Right ventricle myocardium inferior (tissue), 1 donor: ENCODE measurements at regions of chr20 and their contacts with region 1.

Region 1: GRCh38 chr20:17682103-17682888 is at the start of gene RRBP1:
- DNase-seq: peak; percentile 99
- ATAC-seq: peak; percentile 96
- total RNA-seq, gene RRBP1: 38.5 TPM

Region 2: GRCh38 chr20:17542993-17543412 is 139.3 kb before region 1 on chr20:
- intact Hi-C with region 1: no loop called
- DNase-seq: no peak
- ATAC-seq: peak; percentile 79

Region 3: GRCh38 chr20:17749975-17750721 is 67.9 kb after region 1 on chr20:
- intact Hi-C with region 1: loop called (anchors 5 kb)
- DNase-seq: peak; percentile 81
- ATAC-seq: peak; percentile 92

Region 4: DNA sequence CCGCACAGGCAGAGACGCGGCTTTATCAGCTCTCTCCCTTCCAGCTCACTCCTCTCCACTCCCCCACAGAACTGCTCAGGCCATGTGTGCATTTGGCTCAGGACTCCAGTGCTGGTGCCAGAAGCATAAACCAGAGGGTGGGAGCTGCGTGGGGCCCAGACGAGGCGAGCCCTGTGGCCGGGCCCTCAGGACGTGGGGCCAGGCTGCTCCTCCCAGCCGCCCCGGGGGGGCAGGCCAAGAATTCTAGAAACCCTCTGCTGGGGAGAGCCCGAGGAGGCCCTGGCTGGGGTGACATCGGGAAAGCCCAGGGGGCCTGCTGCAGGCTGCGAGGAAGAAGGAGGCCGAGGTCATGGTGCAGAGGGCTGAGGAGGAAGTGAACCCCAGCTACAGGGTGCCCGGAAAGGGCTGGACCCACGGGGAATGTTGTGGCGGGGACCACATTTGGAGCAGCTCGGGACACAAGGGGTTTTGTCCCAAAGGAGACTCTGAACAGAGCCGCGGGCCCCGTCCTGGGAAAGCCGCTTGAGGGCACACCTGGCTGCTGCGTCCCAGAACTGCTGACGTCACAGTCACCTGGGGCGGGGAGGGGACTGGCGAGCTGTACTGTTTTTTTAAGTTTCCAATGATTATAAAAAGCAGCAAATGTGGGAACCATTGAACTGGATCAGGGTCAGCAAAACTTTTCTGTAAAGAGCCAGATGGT is 124.6 kb after region 1 on chr20:
- intact Hi-C with region 1: loop called (anchors 5 kb)
- DNase-seq: peak; percentile 86
- ATAC-seq: peak; percentile 91

Region 5: DNA sequence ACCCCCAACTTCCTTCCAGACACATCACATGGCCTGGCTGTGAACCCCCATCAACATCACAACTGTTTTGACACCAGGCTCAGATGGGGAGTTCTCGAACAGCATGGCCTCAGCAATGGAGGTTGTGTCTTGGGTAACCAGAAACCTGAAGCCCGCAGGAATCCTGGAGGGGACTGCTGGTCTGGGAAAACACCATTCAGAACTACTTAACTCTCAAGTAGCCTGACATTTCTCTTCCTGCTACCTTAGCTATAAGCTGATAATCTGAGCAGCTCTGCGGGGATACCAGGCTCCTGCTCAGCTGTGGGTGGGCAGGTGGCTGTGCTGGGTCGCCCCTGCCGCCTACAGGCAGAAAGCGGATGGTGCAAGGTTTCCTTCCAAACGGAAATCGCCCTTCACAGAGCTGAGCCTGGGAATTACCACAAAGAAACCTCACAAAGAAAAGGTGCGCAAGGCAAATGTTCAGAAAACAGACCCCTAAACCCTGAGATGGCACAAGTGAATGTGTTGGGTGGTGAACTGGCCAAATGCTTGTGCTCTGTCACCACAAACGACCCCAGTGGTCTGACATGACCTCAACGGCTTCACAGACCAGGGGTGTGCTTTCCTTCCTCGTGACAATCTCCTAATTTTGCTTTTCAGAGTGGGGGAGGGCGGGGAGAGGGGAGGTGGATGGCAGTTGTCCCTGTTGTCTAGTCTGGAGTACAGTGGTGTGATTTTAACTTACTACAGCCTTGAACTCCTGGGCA is 256.7 kb after region 1 on chr20:
- intact Hi-C with region 1: loop called (anchors 5 kb)
- DNase-seq: peak; percentile 77
- ATAC-seq: peak; percentile 70

Region 6: DNA sequence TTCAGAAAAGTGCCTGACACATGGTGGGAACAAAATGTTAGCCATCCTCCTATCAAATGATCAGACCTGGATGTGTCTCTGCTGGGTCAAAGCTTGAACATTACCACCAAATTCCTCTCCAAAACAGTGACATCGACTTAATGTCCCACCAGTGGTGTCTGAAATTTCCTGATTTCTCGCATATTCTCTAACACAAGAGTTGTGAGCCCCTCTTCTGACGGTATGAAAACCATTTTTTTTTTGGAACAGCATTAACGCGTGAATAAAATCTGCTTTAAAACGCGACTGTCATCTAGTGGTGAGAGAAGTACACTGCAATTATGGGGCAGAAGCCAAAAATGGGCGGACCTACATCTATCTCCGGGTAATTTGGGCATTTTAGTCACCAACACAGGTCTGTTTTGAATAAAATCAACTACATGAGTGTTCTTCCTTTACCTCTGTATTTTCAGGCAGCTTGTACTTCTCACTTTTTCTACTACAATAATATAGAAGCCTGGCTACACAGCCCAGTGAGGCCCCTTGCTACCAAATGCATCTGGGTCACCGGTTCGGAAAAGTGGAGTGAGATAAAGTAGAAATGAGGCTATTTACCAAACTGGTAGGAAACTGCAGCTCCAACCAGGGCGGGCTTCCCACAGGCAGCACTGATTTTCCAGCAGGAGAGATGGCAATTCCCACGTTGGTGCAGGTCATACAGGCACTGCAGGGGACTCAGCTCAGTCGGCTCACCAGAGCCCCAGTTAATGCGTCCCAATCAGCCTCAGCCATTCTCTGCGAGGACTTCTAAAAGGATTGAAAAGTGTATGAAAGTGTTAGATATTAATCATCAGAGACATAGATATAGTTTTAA is 313.9 kb after region 1 on chr20:
- intact Hi-C with region 1: loop called (anchors 10 kb)
- DNase-seq: no peak
- ATAC-seq: peak; percentile 42